Right ventricle myocardium inferior (tissue), 1 donor: ENCODE measurements at regions of chr17 and their contacts with region 1.

Region 1: GRCh38 chr17:17237026-17237799 is at the start of gene FLCN:
- DNase-seq: peak; percentile 99
- ATAC-seq: peak; percentile 97
- total RNA-seq, gene FLCN: 56.4 TPM

Region 2: DNA sequence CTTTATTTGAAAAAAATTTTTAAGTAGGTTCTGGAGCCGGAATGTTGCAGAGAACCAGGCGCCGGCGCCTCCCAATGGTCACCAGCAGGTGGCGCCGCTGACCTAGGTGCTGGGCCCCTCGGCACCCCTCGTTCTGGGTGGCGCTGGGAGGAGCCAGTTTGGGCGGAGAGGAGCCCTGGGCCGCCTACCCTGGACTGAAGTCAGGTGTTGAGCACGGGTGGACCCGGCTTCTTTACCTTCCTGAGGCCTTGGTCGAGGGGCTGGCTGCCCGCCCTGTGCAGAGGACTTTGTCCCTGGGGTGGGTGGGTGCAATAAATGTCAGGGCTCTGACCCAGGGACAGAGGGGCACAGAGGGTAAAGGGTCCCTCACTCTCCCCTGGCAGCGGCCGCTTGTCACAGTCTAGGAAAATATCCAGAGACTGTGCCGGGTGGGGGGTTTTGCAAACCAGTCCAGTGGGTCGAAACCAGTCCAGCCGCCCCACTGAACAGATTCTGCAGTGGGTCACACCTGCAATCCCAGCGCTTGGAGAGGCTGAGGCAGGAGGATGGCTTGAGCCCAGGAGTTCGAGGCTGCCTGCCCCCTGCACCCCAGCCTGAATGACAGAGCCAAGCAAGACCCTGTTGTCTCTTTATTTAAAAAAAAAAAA is 235.2 kb before region 1 on chr17:
- intact Hi-C with region 1: loop called (anchors 5 kb)
- DNase-seq: peak; percentile 93
- ATAC-seq: peak; percentile 82

Region 3: DNA sequence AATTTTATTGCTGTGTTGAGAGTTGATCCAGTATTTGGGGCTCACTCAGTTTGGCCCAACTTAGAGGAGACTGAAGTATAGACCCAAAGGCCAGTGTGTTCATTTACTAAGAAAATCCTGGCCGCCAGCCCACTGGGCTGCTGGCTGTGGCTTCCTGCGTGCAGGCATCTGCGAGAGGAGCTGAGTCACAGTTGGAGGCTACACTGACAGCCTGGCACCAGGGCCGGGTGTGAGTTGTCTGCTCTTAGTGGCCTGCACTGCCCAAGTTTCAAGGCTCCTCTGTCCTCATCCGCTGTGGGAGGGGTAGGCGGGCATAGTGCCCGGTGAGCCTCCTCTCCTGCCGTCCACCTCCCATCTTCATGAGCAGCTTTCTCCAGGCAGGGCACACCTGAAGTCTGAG is 85.3 kb before region 1 on chr17:
- intact Hi-C with region 1: loop called (anchors 5 kb)
- DNase-seq: peak; percentile 94
- ATAC-seq: peak; percentile 91

Region 4: GRCh38 chr17:17186051-17186450 is 51.2 kb before region 1 on chr17:
- intact Hi-C with region 1: loop called (anchors 5 kb)
- DNase-seq: no peak
- ATAC-seq: no peak